ENCODE measurements at regions of chr20 and their contacts with region 1.

Region 1: GRCh38 chr20:52047811-52048764 is 143.5 kb downstream of the ZFP64 start:
- DNase-seq: peak; percentile 67
- ATAC-seq: peak; percentile 42; the same call in 1 of the 2 replicates
- H3K4me3 ChIP-seq: no peak overlapping the region
- H3K27ac ChIP-seq: no peak overlapping the region
- H3K4me1 ChIP-seq: peaks cover 12% of the 10 kb centered on the region
- H3K27me3 ChIP-seq: no peaks in the 10 kb centered on the region
- CTCF ChIP-seq: no peak
- POLR2A ChIP-seq: no peak
- RAD21 ChIP-seq: no peak

Region 2: GRCh38 chr20:50799890-50800655 is 1248.0 kb before region 1 on chr20:
- CTCF ChIA-PET with region 1: no interaction called
- POLR2A ChIA-PET with region 1: interaction called, 14 read pairs
- dilution Hi-C with region 1: no loop called
- in situ Hi-C with region 1: no loop called
- intact Hi-C with region 1: no loop called
- DNase-seq: no peak
- ATAC-seq: no peak
- H3K4me3 ChIP-seq: no peak overlapping the region
- H3K27ac ChIP-seq: no peak overlapping the region
- H3K4me1 ChIP-seq: no peaks in the 10 kb centered on the region
- H3K27me3 ChIP-seq: no peaks in the 10 kb centered on the region
- CTCF ChIP-seq: no peak
- POLR2A ChIP-seq: no peak
- RAD21 ChIP-seq: no peak

Region 3: DNA sequence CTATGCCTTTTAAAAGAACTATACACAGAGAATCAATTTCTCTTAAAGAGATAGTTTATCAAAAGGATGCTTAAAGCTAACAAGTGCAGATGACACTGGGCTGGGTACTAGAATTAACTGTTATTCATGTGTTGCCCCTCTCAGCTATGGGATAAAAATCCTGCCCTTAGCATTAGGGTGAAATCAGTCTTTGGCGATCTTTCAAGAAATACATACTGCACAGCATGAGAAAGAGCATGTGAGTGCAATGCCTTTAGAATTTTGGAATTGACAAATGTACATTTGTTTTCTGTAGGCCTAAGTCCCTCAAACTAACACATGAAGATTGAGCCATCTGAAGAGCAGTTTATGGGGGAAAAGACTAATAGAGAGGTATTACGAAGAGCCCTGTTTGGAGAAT is 28.1 kb after region 1 on chr20:
- CTCF ChIA-PET with region 1: no interaction called
- POLR2A ChIA-PET with region 1: no interaction called
- dilution Hi-C with region 1: no loop called
- in situ Hi-C with region 1: no loop called
- intact Hi-C with region 1: no loop called
- DNase-seq: peak; percentile 7
- ATAC-seq: no peak
- H3K4me3 ChIP-seq: no peak overlapping the region
- H3K27ac ChIP-seq: no peak overlapping the region
- H3K4me1 ChIP-seq: peaks cover 2% of the 10 kb centered on the region; the same call in 1 of the 2 replicates
- H3K27me3 ChIP-seq: no peaks in the 10 kb centered on the region
- CTCF ChIP-seq: no peak
- POLR2A ChIP-seq: no peak
- RAD21 ChIP-seq: no peak

Region 4: GRCh38 chr20:52137850-52138249 is 89.8 kb after region 1 on chr20:
- CTCF ChIA-PET with region 1: no interaction called
- POLR2A ChIA-PET with region 1: no interaction called
- dilution Hi-C with region 1: no loop called
- in situ Hi-C with region 1: no loop called
- intact Hi-C with region 1: no loop called
- DNase-seq: no peak
- ATAC-seq: no peak
- H3K4me3 ChIP-seq: no peak overlapping the region
- H3K27ac ChIP-seq: no peak overlapping the region
- H3K4me1 ChIP-seq: no peaks in the 10 kb centered on the region
- H3K27me3 ChIP-seq: no peaks in the 10 kb centered on the region
- CTCF ChIP-seq: no peak
- POLR2A ChIP-seq: no peak
- RAD21 ChIP-seq: no peak

Measured in IMR-90 (cell line).